ENCODE measurements at regions of chr12 and their contacts with region 1.

Region 1: DNA sequence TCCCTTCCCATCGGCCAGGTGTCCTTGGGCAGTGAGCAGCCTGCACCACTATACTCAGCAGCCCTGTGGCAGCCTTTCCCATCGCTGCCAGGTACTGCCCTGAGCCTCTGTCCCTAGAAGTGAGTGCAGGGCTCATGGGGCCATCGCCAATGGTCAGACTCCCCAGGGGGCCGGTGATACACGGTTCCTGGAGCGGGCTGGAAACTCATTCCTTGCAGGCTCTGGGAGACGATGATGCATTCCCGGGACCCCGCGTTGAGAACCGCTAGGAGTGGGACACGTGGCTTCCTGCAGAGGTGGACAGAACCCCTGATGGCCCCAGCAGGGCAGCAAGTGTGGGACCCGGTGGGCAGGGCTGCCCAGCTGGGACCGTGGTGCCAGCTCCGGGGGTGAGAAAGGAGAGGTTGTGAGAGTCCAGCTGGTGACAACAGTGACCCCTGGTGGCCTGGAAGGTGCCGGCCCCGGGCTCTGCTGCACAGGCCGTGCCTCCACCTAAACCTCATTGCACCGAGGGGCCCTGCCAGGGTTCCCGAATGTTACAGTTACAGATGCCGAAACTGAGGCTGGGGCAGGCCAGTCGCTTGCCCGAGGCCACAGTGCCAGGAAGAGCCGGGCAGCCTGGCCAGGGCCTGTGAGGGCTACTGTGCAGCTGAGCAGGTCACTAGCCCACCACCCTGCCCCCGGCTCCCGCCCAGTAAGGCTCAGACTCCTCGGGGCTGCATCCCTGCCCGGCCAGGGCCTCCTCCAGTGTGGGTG is 33.8 kb downstream of the FBRSL1 start:
- DNase-seq: peak; percentile 48 to 81 (median 70)
- ATAC-seq: peak; percentile 78
- H3K4me3 ChIP-seq: no peak overlapping the region
- H3K4me3 Mint-ChIP-seq: no peak overlapping the region
- H3K27ac ChIP-seq: no peak overlapping the region
- H3K27ac Mint-ChIP-seq: peak overlapping the region in 1 of 9 donors; percentile 9
- H3K4me1 ChIP-seq: peaks cover 3 to 7% of the 10 kb centered on the region in 2 donors
- H3K4me1 Mint-ChIP-seq: peaks cover 0 to 16% (median 9%) of the 10 kb centered on the region in 7 donors
- H3K27me3 ChIP-seq: no peaks in the 10 kb centered on the region
- H3K27me3 Mint-ChIP-seq: no peaks in the 10 kb centered on the region

Region 2: GRCh38 chr12:132414634-132415326 is 109.0 kb before region 1 on chr12:
- CTCF ChIA-PET with region 1: interaction called, 56 read pairs
- POLR2A ChIA-PET with region 1: interaction called, 4 read pairs
- intact Hi-C with region 1: loop called (anchors 1 kb)
- DNase-seq: peak; percentile 54 to 82 (median 68)
- ATAC-seq: peak; percentile 92
- H3K4me3 ChIP-seq: no peak overlapping the region
- H3K4me3 Mint-ChIP-seq: peak overlapping the region in 4 of 10 donors; percentile 25 to 43 (median 35)
- H3K27ac ChIP-seq: no peak overlapping the region
- H3K27ac Mint-ChIP-seq: no peak overlapping the region
- H3K4me1 ChIP-seq: peaks cover 5 to 15% of the 10 kb centered on the region in 2 donors
- H3K4me1 Mint-ChIP-seq: peaks cover 0 to 5% (median 3%) of the 10 kb centered on the region in 7 donors
- H3K27me3 ChIP-seq: no peaks in the 10 kb centered on the region
- H3K27me3 Mint-ChIP-seq: peaks cover 0 to 9% (median 0%) of the 10 kb centered on the region in 5 donors

Region 3: DNA sequence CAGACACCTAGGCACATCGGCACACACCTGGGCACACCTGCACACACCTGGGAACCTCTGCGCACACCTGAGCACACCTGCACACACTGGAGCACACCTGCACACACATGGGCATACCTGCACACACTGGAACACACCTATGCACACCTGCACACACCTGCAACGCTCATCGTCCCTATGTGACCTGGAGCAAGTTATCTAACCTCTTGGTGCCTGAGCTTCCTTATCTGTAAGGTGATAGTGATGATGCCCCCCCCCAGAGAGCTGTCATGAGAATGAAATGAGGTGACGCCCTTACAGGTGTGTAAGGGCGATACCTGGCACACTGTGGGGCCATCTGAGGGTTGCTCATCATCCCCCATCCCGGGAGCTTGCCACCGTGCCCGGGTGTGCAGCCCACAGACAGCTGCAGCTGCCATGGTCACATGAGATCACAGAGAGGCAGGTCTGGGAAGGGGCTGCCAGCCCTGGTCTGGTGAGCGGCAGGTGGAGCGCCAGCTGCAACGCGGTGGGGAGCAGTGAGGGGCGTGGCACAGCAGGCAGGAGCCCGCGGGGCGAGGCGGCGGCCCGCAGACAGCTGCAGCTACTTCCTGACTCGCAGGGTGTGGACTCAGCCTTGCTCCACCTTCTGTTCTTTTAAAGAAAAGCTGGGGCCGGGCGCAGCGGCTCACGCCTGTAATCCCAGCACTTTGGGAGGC is 93.7 kb before region 1 on chr12:
- CTCF ChIA-PET with region 1: interaction called, 10 read pairs
- POLR2A ChIA-PET with region 1: no interaction called
- intact Hi-C with region 1: loop called in 1 of 2 experiments (anchors 1 kb)
- DNase-seq: peak; percentile 49 to 71 (median 65)
- ATAC-seq: peak; percentile 93
- H3K4me3 ChIP-seq: peak overlapping the region; percentile 48
- H3K4me3 Mint-ChIP-seq: peak overlapping the region; percentile 42 to 81 (median 77)
- H3K27ac ChIP-seq: no peak overlapping the region
- H3K27ac Mint-ChIP-seq: peak overlapping the region in 8 of 9 donors; percentile 17 to 83 (median 76)
- H3K4me1 ChIP-seq: peaks cover 11 to 33% of the 10 kb centered on the region in 2 donors
- H3K4me1 Mint-ChIP-seq: peaks cover 17 to 44% (median 34%) of the 10 kb centered on the region in 7 donors
- H3K27me3 ChIP-seq: no peaks in the 10 kb centered on the region
- H3K27me3 Mint-ChIP-seq: peaks cover 0 to 6% (median 0%) of the 10 kb centered on the region in 5 donors

Region 4: GRCh38 chr12:132437252-132437932 is 86.4 kb before region 1 on chr12:
- CTCF ChIA-PET with region 1: no interaction called
- POLR2A ChIA-PET with region 1: no interaction called
- intact Hi-C with region 1: loop called in 1 of 2 experiments (anchors 1 kb)
- DNase-seq: no peak
- ATAC-seq: peak; percentile 24
- H3K4me3 ChIP-seq: peak overlapping the region; percentile 30
- H3K4me3 Mint-ChIP-seq: peak overlapping the region; percentile 25 to 84 (median 70)
- H3K27ac ChIP-seq: peak overlapping the region; percentile 50
- H3K27ac Mint-ChIP-seq: peak overlapping the region in 6 of 9 donors; percentile 38 to 72 (median 50)
- H3K4me1 ChIP-seq: peaks cover 12 to 48% of the 10 kb centered on the region in 2 donors
- H3K4me1 Mint-ChIP-seq: peaks cover 17 to 70% (median 51%) of the 10 kb centered on the region in 7 donors
- H3K27me3 ChIP-seq: no peaks in the 10 kb centered on the region
- H3K27me3 Mint-ChIP-seq: peaks cover 0 to 4% (median 0%) of the 10 kb centered on the region in 5 donors

Region 5: DNA sequence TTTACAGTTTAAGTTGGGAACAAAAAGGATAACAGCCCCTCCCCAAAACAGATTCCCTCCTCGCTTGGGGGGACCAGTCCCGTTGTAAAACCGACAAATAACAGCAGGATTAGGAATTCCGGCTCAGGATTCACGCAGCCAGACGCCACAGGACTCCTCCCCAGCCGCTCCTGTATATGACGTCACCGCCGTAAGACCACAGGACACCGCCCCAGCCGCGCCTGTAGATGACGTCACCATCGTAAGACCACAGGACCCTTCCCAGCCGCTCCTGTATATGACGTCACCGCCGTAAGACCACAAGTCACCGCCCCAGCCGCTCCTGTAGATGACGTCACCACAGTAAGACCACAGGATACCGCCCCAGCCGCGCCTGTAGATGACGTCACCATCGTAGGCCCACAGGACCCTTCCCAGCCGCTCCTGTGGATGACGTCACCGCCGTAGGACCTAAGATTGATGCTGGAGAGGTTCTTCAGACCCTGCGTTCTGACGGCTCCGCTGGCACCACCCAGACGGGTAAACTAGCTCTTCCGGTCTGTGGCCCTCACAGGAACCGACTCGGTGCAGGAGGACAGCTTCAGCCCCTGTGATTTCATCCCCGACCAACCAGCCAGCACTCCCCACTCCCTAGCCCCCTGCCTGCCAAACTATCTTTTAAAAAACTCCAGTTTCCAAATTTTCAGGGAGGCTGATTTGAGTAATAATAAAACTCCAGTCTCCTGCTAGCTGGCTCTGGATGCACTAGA is 77.7 kb before region 1 on chr12:
- CTCF ChIA-PET with region 1: interaction called, 5 read pairs
- POLR2A ChIA-PET with region 1: no interaction called
- intact Hi-C with region 1: loop called in 1 of 2 experiments (anchors 2 kb)
- DNase-seq: peak; percentile 34 to 76 (median 64)
- ATAC-seq: peak; percentile 72
- H3K4me3 ChIP-seq: peak overlapping the region; percentile 61
- H3K4me3 Mint-ChIP-seq: peak overlapping the region; percentile 66 to 97 (median 90)
- H3K27ac ChIP-seq: peak overlapping the region; percentile 99
- H3K27ac Mint-ChIP-seq: peak overlapping the region; percentile 98 to 100 (median 100)
- H3K4me1 ChIP-seq: peaks cover 18 to 47% of the 10 kb centered on the region in 2 donors
- H3K4me1 Mint-ChIP-seq: peaks cover 21 to 74% (median 46%) of the 10 kb centered on the region in 7 donors
- H3K27me3 ChIP-seq: no peaks in the 10 kb centered on the region
- H3K27me3 Mint-ChIP-seq: peaks cover 0 to 3% (median 0%) of the 10 kb centered on the region in 5 donors

Region 6: GRCh38 chr12:132475304-132476037 is 48.3 kb before region 1 on chr12:
- CTCF ChIA-PET with region 1: interaction called, 4 read pairs
- POLR2A ChIA-PET with region 1: no interaction called
- intact Hi-C with region 1: loop called in 1 of 2 experiments (anchors 5 kb)
- DNase-seq: peak in 5 of 9 donors; percentile 42 to 69 (median 46)
- ATAC-seq: peak; percentile 55
- H3K4me3 ChIP-seq: peak overlapping the region; percentile 24
- H3K4me3 Mint-ChIP-seq: peak overlapping the region; percentile 44 to 77 (median 70)
- H3K27ac ChIP-seq: no peak overlapping the region
- H3K27ac Mint-ChIP-seq: peak overlapping the region in 8 of 9 donors; percentile 61 to 93 (median 86)
- H3K4me1 ChIP-seq: peaks cover 11 to 26% of the 10 kb centered on the region in 2 donors
- H3K4me1 Mint-ChIP-seq: peaks cover 29 to 54% (median 33%) of the 10 kb centered on the region in 7 donors
- H3K27me3 ChIP-seq: no peaks in the 10 kb centered on the region
- H3K27me3 Mint-ChIP-seq: peaks cover 0 to 12% (median 0%) of the 10 kb centered on the region in 5 donors

Region 7: GRCh38 chr12:132614861-132615578 is 91.3 kb after region 1 on chr12:
- CTCF ChIA-PET with region 1: interaction called, 4 read pairs
- POLR2A ChIA-PET with region 1: no interaction called
- intact Hi-C with region 1: loop called in 1 of 2 experiments (anchors 5 kb)
- DNase-seq: peak; percentile 59 to 84 (median 77)
- ATAC-seq: peak; percentile 89
- H3K4me3 ChIP-seq: no peak overlapping the region
- H3K4me3 Mint-ChIP-seq: peak overlapping the region in 2 of 10 donors; percentile 3 to 49
- H3K27ac ChIP-seq: no peak overlapping the region
- H3K27ac Mint-ChIP-seq: peak overlapping the region in 1 of 9 donors; percentile 19
- H3K4me1 ChIP-seq: peaks cover 0 to 12% of the 10 kb centered on the region in 2 donors
- H3K4me1 Mint-ChIP-seq: peaks cover 5 to 23% (median 18%) of the 10 kb centered on the region in 7 donors
- H3K27me3 ChIP-seq: peaks cover 4 to 19% of the 10 kb centered on the region in 2 donors
- H3K27me3 Mint-ChIP-seq: peaks cover 31 to 44% (median 40%) of the 10 kb centered on the region in 5 donors